MCF 10A (cell line): ENCODE measurements at regions of chr2 and their contacts with region 1.

Region 1: DNA sequence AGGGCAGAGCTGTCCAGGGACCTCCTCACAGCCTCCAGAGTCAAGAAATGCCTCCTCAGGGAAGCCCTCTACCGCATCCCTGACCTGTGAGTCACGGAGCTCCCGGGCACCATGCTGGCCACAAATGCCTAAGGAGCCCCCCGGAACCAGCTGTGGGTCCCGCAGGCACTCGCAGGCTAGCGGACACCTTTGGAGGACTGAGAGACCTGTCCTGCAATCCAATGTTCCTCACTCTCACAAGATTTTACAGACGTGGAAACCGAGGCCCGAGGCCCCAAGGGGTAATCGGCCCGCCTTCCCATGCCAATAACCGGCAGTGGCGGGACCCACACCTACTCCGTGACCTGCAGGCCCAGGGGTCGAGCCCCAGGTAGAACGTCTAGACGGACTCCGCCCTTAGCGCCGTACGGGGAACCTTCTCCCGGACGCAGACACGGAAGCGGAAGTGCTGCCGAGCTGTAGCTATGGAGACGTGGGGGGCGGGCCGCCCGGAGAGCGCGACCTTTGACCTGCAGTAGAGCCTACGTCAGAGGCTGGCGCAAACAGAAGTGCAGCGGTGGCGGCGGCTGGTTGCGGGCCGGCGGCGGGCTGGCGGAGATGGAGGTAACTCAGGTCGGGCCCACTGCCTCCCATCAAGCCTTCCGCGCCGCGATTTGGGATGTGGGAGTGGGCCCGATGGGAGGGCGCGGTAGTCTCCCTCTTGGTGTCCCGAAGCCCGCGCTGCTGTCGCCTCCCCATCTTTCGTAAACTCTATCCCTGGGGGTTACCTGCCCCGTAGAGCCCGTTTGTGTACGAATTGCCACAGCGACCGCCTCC is at the start of gene GCC2:
- DNase-seq: peak; percentile 91
- H3K4me3 Mint-ChIP-seq: peak within 1 kb of the TSS; percentile 93
- H3K27ac Mint-ChIP-seq: peak within 1 kb of the TSS; percentile 99
- H3K4me1 Mint-ChIP-seq: peaks cover 11% of the 10 kb centered on the region
- H3K27me3 Mint-ChIP-seq: no peaks in the 10 kb centered on the region
- CTCF ChIP-seq: no peak
- total RNA-seq, gene GCC2: 29.8 and 39.7 TPM in 2 replicates

Region 2: DNA sequence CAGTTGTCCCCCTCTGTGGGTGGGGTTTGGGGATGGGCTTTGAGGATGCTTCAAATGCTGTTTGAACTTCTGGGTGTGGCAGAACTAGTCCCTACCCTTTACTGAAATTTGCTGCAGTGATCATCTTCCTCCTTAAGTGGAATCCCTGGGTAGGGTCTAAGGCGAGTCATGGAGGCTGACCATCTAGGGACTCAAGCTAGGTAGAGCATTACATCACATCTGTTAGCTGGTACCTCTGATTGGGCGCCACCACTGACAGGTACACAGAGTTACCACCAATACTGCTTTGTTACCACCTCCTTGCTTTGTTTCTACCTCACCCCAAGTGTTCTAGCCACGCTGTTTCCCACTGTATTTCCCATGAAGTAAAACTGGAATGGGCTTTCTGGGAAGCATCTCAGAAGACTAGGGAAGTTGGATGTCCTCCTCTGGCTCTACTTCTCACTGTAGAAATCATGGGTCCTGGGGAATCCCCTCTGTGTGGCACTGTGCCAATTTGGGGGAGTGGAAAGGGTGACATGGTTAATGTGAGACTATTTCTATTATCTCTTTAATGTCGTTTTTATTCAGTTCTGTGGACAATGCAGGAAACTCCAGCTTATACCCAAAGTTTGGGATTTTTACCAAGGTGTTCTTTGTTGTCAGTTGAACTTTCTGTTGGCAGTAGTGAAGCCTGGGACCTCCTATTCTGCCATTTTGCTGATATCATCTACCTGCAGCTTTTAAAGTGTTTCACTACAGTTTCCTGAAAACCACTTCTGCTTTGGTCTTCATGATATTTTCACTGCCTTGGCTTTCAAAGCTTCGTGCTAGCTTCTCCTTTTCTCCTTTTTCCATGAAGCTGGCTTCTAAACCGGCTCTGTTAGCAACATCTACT is 85.6 kb before region 1 on chr2:
- CTCF ChIA-PET with region 1: no interaction called
- POLR2A ChIA-PET with region 1: interaction called, 17 read pairs
- intact Hi-C with region 1: no loop called
- DNase-seq: peak; percentile 18
- H3K4me3 Mint-ChIP-seq: no peak overlapping the region
- H3K27ac Mint-ChIP-seq: peak overlapping the region; percentile 64
- H3K4me1 Mint-ChIP-seq: peaks cover 25% of the 10 kb centered on the region
- H3K27me3 Mint-ChIP-seq: no peaks in the 10 kb centered on the region
- CTCF ChIP-seq: no peak

Region 3: DNA sequence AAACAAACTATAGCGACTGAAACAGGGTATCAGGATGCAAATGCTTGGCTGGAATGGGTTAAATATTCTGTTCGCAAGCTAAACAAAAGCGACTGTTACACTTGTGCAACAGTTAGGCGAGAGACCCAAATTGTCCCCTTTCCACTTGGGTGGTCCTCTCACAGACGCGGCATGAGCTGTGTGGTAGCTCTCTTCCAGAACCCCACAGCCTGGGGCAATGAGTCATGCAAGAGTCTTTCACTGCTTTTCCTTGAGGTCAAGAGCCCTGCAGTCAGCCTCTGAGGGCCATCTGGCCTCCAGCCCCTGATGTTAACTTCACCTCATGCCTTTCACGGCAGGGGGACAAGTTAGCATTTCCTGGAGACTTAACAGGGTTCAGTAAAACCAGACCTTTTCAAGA is 45.4 kb before region 1 on chr2:
- CTCF ChIA-PET with region 1: interaction called, 5 read pairs
- POLR2A ChIA-PET with region 1: interaction called, 59 read pairs
- intact Hi-C with region 1: no loop called
- DNase-seq: peak; percentile 22
- H3K4me3 Mint-ChIP-seq: no peak overlapping the region
- H3K27ac Mint-ChIP-seq: no peak overlapping the region
- H3K4me1 Mint-ChIP-seq: peaks cover 5% of the 10 kb centered on the region
- H3K27me3 Mint-ChIP-seq: no peaks in the 10 kb centered on the region
- CTCF ChIP-seq: no peak

Region 4: DNA sequence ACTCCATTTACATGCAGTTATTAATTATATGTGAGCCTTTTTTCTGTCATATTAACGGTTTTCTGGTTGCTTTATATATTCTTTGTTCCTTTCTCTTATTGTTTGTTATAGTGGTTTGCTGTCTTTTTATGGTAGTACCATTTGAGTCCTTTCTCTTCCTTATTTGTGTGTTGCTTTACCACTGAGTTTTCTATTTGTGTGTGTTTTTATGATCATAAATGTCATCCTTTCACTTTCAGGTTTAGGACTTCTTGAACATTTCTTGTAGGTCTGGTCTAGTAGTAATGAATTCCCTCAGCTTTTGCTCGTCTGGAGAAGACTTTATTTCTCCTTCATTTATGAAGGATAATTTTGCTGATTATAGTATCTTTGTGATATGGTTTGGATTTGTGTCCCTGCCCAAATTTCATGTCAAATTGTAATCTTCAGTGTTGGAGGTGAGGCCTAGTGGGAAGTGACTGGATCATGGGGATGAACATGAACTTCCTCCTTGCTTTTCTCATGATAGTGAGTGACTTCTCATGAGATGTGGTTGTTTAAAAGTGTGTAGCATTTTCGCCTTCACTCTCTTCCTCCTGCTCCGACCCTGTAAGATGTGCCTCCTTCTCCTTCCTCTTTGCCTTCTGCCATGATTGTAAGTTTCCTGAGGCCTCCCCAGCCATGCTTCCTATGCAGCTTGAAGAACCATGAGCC is 11.6 kb after region 1 on chr2:
- CTCF ChIA-PET with region 1: interaction called, 4 read pairs
- POLR2A ChIA-PET with region 1: interaction called, 18 read pairs
- intact Hi-C with region 1: no loop called
- DNase-seq: no peak
- H3K4me3 Mint-ChIP-seq: no peak overlapping the region
- H3K27ac Mint-ChIP-seq: peak overlapping the region; percentile 16
- H3K4me1 Mint-ChIP-seq: peaks cover 7% of the 10 kb centered on the region
- H3K27me3 Mint-ChIP-seq: no peaks in the 10 kb centered on the region
- CTCF ChIP-seq: no peak

Region 5: GRCh38 chr2:108575132-108575966 is 126.5 kb after region 1 on chr2:
- CTCF ChIA-PET with region 1: no interaction called
- POLR2A ChIA-PET with region 1: interaction called, 22 read pairs
- intact Hi-C with region 1: no loop called
- DNase-seq: peak; percentile 59
- H3K4me3 Mint-ChIP-seq: peak overlapping the region; percentile 3
- H3K27ac Mint-ChIP-seq: peak overlapping the region; percentile 65
- H3K4me1 Mint-ChIP-seq: peaks cover 60% of the 10 kb centered on the region
- H3K27me3 Mint-ChIP-seq: no peaks in the 10 kb centered on the region
- CTCF ChIP-seq: no peak

Region 6: GRCh38 chr2:109135359-109136197 is 686.7 kb after region 1 on chr2:
- CTCF ChIA-PET with region 1: no interaction called
- POLR2A ChIA-PET with region 1: no interaction called
- intact Hi-C with region 1: no loop called
- DNase-seq: no peak
- H3K4me3 Mint-ChIP-seq: no peak overlapping the region
- H3K27ac Mint-ChIP-seq: no peak overlapping the region
- H3K4me1 Mint-ChIP-seq: peaks cover 34% of the 10 kb centered on the region
- H3K27me3 Mint-ChIP-seq: no peaks in the 10 kb centered on the region
- CTCF ChIP-seq: no peak